ENCODE measurements at regions of chr17 and their contacts with region 1.

Region 1: GRCh38 chr17:2416010-2416734 is 15.3 kb upstream of the MNT start:
- DNase-seq: peak; percentile 86
- ATAC-seq: peak; percentile 72
- H3K4me3 ChIP-seq: no peak overlapping the region
- H3K27ac ChIP-seq: peak overlapping the region; percentile 16; the same call in 1 of the 2 replicates
- H3K4me1 ChIP-seq: peaks cover 22% of the 10 kb centered on the region
- H3K27me3 ChIP-seq: no peaks in the 10 kb centered on the region
- CTCF ChIP-seq: peak; percentile 98
- POLR2A ChIP-seq: peak; percentile 46
- RAD21 ChIP-seq: peak; percentile 97

Region 2: GRCh38 chr17:2374549-2375277 is 41.5 kb before region 1 on chr17:
- CTCF ChIA-PET with region 1: no interaction called
- POLR2A ChIA-PET with region 1: no interaction called
- dilution Hi-C with region 1: no loop called
- in situ Hi-C with region 1: loop called (anchors 5 kb)
- intact Hi-C with region 1: no loop called
- DNase-seq: no peak
- ATAC-seq: no peak
- H3K4me3 ChIP-seq: no peak overlapping the region
- H3K27ac ChIP-seq: no peak overlapping the region
- H3K4me1 ChIP-seq: no peaks in the 10 kb centered on the region
- H3K27me3 ChIP-seq: no peaks in the 10 kb centered on the region
- CTCF ChIP-seq: no peak
- POLR2A ChIP-seq: no peak
- RAD21 ChIP-seq: no peak

Region 3: GRCh38 chr17:2386400-2387085 is 29.6 kb before region 1 on chr17:
- CTCF ChIA-PET with region 1: interaction called, 64 read pairs
- POLR2A ChIA-PET with region 1: interaction called, 3 read pairs
- dilution Hi-C with region 1: no loop called
- in situ Hi-C with region 1: no loop called
- intact Hi-C with region 1: loop called (anchors 1 kb)
- DNase-seq: no peak
- ATAC-seq: no peak
- H3K4me3 ChIP-seq: no peak overlapping the region
- H3K27ac ChIP-seq: no peak overlapping the region
- H3K4me1 ChIP-seq: peaks cover 3% of the 10 kb centered on the region
- H3K27me3 ChIP-seq: no peaks in the 10 kb centered on the region
- CTCF ChIP-seq: no peak
- POLR2A ChIP-seq: no peak
- RAD21 ChIP-seq: no peak

Region 4: GRCh38 chr17:2392252-2393173 is 23.7 kb before region 1 on chr17:
- CTCF ChIA-PET with region 1: interaction called, 6 read pairs
- POLR2A ChIA-PET with region 1: no interaction called
- dilution Hi-C with region 1: no loop called
- in situ Hi-C with region 1: no loop called
- intact Hi-C with region 1: loop called (anchors 1 kb)
- DNase-seq: peak; percentile 94
- ATAC-seq: peak; percentile 59
- H3K4me3 ChIP-seq: peak overlapping the region; percentile 61
- H3K27ac ChIP-seq: peak overlapping the region; percentile 98
- H3K4me1 ChIP-seq: peaks cover 31% of the 10 kb centered on the region
- H3K27me3 ChIP-seq: no peaks in the 10 kb centered on the region
- CTCF ChIP-seq: no peak
- POLR2A ChIP-seq: peak; percentile 65
- RAD21 ChIP-seq: no peak

Region 5: GRCh38 chr17:2459917-2460271 is 43.7 kb after region 1 on chr17:
- CTCF ChIA-PET with region 1: interaction called, 3 read pairs
- POLR2A ChIA-PET with region 1: no interaction called
- dilution Hi-C with region 1: no loop called
- in situ Hi-C with region 1: no loop called
- intact Hi-C with region 1: loop called (anchors 2 kb)
- DNase-seq: no peak
- ATAC-seq: no peak
- H3K4me3 ChIP-seq: no peak overlapping the region
- H3K27ac ChIP-seq: peak overlapping the region; percentile 69; the same call in 1 of the 2 replicates
- H3K4me1 ChIP-seq: peaks cover 8% of the 10 kb centered on the region
- H3K27me3 ChIP-seq: no peaks in the 10 kb centered on the region
- CTCF ChIP-seq: no peak
- POLR2A ChIP-seq: no peak
- RAD21 ChIP-seq: no peak

Region 6: GRCh38 chr17:2542456-2542855 is 126.3 kb after region 1 on chr17:
- CTCF ChIA-PET with region 1: no interaction called
- POLR2A ChIA-PET with region 1: no interaction called
- dilution Hi-C with region 1: no loop called
- in situ Hi-C with region 1: no loop called
- intact Hi-C with region 1: no loop called
- DNase-seq: no peak
- ATAC-seq: no peak
- H3K4me3 ChIP-seq: no peak overlapping the region
- H3K27ac ChIP-seq: no peak overlapping the region
- H3K4me1 ChIP-seq: no peaks in the 10 kb centered on the region
- H3K27me3 ChIP-seq: peaks cover 2% of the 10 kb centered on the region
- CTCF ChIP-seq: no peak
- POLR2A ChIP-seq: no peak
- RAD21 ChIP-seq: no peak

Measured in IMR-90 (cell line).